Breast epithelium (tissue), 4 donors: ENCODE measurements at regions of chr2 and their contacts with region 1.

Region 1: DNA sequence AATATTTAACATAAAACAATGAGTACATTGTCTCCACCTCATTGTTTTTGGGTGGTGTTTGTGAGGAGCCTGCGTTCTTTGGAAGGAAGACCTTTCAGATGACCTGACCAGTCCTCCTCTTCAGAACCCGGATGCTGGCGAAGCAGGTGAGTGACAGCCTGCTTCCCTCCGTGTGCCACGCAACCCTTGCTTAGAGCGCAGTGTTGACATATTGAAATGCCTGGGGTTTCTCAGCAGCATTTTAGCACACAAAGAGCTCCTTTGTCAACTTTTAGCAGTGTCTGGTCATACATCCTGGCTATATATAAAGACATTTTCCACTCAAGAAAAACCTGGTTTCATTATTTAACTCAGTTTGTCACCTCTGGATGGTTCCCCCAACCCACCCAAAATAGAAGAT is 335.7 kb upstream of the POU3F3 start:
- DNase-seq: no peak
- H3K4me3 ChIP-seq: no peak overlapping the region
- H3K27ac ChIP-seq: no peak overlapping the region
- H3K4me1 ChIP-seq: no peaks in the 10 kb centered on the region
- H3K27me3 ChIP-seq: no peaks in the 10 kb centered on the region
- CTCF ChIP-seq: no peak
- POLR2A ChIP-seq: no peak

Region 2: DNA sequence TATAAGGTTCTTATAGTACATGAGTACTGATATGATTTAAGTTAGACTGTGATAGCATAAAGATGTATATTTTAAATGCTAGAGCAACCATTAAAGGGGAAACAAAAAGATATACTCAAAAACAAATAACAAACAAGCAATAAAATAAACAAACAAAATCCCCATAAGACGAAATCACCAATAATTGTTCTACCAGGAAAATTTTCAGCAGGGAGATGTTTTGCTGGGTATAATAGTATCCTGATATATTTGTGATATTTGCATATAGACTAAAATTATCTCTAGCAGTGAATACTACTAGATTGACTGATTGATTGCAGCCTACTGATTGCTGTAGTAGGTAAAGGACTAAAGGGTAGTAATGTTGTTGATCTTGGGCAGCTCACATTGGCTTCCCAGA is 1579.0 kb before region 1 on chr2:
- intact Hi-C with region 1: loop called (anchors 5 kb)
- DNase-seq: no peak
- H3K4me3 ChIP-seq: no peak overlapping the region
- H3K27ac ChIP-seq: no peak overlapping the region
- H3K4me1 ChIP-seq: no peaks in the 10 kb centered on the region
- H3K27me3 ChIP-seq: no peaks in the 10 kb centered on the region
- CTCF ChIP-seq: no peak
- POLR2A ChIP-seq: no peak

Region 3: DNA sequence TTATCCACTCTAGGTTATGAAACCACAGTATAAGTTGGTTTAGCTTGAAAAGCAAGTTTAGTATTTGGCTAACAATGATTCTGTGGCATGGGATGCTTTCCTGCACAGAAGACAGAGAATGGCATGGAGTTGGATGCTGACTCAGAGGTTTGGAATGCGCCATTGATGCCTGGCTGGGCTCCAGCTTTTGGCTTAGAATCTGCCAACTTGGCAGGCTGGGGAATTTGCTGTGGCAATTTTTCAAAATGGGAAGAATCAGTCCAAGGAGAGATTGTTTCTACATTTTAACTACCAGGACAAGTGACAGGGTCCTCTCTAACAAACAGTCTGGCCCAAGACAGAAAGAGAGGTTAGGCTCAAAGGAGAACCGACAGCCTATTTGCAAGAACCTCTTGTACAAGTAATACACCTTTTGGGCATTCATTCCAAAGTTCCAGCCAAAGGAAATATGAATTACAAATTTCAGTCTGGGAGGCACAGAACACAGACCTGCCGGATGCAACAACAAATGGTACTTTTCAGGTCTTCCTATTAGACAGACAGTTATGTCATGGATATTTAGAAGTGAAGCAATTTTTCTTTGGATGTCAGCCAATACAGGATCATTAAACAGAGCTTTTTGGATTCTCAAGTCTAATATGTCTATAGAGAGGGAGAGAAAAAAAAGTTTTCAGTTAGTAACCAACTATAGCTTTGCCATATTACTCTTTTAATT is 728.7 kb before region 1 on chr2:
- intact Hi-C with region 1: loop called (anchors 5 kb)
- DNase-seq: peak; percentile 42 to 55
- H3K4me3 ChIP-seq: no peak overlapping the region
- H3K27ac ChIP-seq: no peak overlapping the region
- H3K4me1 ChIP-seq: no peaks in the 10 kb centered on the region
- H3K27me3 ChIP-seq: no peaks in the 10 kb centered on the region
- CTCF ChIP-seq: no peak
- POLR2A ChIP-seq: no peak